ENCODE measurements at regions of chr14 and their contacts with region 1.

Region 1: DNA sequence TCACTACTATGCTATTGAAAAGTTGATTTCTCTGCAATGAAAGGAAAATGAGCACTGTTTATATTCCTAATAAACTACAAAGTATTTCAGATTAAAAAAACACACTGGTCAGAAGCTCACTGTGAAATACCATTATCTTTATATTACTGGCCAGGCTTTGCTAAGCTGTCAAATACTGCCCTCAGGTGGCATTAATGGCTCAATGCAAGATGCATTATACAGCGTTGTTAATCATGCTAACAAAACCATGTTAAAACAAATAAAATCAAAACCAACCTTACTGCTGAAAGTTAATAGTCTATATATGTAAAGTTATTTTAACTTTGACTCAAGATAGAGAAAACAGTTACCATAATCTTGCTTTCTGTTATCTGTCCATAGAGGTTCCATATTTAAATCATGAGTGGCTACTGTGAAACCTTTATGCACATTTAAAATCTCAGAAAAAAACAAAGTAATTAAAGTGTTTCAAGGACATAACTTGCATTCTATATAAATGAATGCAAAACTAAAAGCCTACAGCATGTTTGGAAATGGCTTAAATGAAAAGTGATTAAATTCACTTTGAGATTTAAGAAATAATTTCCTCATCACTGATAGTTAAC is 121.7 kb downstream of the RALGAPA1 start:
- DNase-seq: peak; percentile 2
- ATAC-seq: peak; percentile 90
- H3K4me3 ChIP-seq: no peak overlapping the region
- H3K27ac ChIP-seq: no peak overlapping the region
- H3K4me1 ChIP-seq: peaks cover 15% of the 10 kb centered on the region; the same call in 1 of the 2 replicates
- H3K27me3 ChIP-seq: no peaks in the 10 kb centered on the region
- CTCF ChIP-seq: peak; percentile 71 to 89 (median 89)
- EP300 ChIP-seq: no peak
- POLR2A ChIP-seq: no peak
- RAD21 ChIP-seq: peak; percentile 99

Region 2: DNA sequence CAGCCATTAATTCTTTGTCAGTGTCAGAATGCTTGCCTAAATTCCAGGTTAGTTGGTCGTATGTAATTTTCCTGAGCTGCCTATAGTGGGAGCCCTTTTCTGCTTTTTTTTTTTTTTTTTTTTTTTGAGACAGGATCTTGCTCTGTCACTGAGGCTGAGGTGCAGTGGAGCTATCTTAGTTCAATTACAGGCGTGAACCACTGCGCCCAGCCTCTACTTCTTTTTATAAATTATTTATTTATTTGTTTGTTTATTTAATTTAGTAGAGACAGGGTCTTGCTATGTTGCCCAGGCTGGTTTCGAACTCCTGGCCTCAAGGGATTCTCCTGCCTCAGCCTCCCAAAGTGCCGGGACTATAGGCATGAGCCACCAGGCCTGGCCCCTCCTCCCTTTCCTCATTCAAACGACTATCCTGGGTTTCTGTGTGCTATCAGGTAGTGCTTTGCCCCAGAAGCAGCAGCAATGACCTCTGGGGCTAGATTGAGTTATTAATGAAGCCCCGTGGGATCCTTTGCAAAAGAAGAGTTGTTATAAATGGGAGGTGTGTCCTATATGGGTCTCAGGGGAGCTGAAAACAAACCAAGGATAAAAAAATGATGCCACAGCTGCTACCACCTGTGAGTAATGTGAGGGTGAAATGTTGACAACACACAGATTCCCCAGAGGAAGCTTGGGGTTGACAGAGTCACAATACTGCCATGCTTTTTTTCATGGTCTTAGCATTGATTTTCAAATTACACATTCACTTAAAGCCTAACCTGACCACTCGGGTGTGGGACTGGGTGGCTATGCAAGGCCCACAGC is 248.3 kb before region 1 on chr14:
- CTCF ChIA-PET with region 1: interaction called, 41 read pairs
- POLR2A ChIA-PET with region 1: no interaction called
- RAD21 ChIA-PET with region 1: interaction called, 20 read pairs
- SMC1A ChIA-PET with region 1: interaction called, 25 read pairs
- in situ Hi-C with region 1: loop called (anchors 25 kb)
- intact Hi-C with region 1: loop called (anchors 2 kb)
- DNase-seq: peak; percentile 39
- ATAC-seq: peak; percentile 76
- H3K4me3 ChIP-seq: no peak overlapping the region
- H3K27ac ChIP-seq: no peak overlapping the region
- H3K4me1 ChIP-seq: no peaks in the 10 kb centered on the region
- H3K27me3 ChIP-seq: no peaks in the 10 kb centered on the region
- CTCF ChIP-seq: peak; percentile 45 to 62 (median 54); a peak in 5 of 6 replicates
- EP300 ChIP-seq: no peak; a peak in 1 of 4 replicates
- POLR2A ChIP-seq: no peak
- RAD21 ChIP-seq: peak; percentile 53

Region 3: DNA sequence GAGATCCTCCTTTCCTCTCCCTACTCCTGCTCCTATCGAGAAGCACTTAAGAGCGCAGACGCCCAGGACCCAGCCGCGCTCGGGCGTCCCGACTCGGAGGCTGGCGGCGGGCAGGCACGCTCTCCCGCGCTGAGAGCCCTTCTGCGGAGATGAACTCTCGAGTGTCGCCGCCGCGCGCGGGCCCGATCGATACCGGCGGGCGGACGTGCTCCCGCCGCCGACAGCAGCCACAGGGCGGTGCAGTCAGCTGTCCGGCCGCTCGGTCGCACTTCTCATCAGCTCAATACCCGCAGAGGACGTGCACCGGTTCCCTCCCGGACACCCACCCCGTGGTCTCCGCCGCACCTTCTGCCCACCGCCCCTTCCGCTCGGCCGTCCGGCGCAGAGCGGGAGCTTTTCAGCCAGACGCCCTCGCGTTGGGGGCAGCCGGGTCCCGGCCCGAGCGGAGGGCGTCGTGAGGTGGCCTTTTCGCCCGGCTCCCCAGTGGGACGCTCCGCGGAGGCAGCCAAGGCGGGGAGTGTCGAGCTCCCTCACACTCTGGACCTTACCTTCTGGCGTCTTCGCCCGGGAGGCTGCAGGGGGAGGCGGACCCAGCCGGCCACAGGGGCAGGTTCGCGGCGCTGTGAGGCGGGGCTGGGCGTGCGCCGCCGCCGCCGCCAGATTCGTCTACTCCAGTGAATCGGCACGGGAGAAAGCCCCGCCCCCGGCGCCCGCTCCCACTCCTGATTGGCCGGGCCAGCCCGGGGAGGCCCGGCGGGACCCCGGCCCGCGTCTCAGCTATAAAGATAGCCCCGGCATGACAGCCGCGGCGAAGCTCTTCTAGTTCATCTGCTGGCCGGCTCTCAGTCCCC is 153.9 kb before region 1 on chr14 and contains the start of gene INSM2:
- CTCF ChIA-PET with region 1: no interaction called
- POLR2A ChIA-PET with region 1: no interaction called
- RAD21 ChIA-PET with region 1: no interaction called
- SMC1A ChIA-PET with region 1: no interaction called
- in situ Hi-C with region 1: no loop called
- intact Hi-C with region 1: loop called (anchors 10 kb)
- DNase-seq: no peak
- ATAC-seq: peak; percentile 91
- H3K4me3 ChIP-seq: peak within 1 kb of the TSS; percentile 70
- H3K27ac ChIP-seq: no peak within 1 kb of the TSS
- H3K4me1 ChIP-seq: peaks cover 8% of the 10 kb centered on the region
- H3K27me3 ChIP-seq: peaks cover 6 to 16% of the 10 kb centered on the region in 2 experiments
- CTCF ChIP-seq: 0 out of 6 replicates have a peak, but pooled peaks of 1 of the 3 experiments have one; percentile 5
- EP300 ChIP-seq: no peak
- POLR2A ChIP-seq: no peak
- RAD21 ChIP-seq: no peak
- polyA plus RNA-seq, gene INSM2: not detected

Region 4: DNA sequence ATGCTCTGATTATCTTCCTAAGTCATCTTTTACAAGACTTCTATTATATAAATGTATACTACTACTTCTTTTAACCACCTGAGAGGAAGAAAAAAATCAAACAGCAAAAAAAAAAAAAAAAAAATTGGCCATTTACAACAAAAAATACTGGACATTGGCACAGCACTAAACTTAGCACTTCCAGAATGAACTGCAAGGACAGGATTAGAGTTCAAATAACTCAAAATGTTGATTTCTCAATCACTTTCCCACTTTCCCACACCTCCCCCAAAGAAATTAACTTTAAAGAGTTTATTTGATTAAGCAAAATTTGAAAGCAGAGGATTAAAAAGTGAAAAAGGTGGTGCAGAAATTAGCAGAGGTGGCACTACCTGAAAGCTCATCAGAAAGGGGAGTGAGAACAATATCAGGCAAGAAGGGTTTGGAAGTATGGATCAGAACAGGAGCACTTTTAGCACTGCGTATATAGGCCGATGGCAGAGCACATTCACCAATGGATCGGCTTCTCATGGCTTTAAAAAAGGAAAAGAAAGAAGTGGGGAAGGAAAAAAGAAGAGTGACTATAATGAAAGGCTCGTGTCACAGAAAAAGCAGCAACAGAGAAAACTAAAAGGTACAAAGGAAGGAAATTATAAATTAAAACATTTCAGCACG is 12.5 kb after region 1 on chr14:
- CTCF ChIA-PET with region 1: interaction called, 9 read pairs
- POLR2A ChIA-PET with region 1: no interaction called
- RAD21 ChIA-PET with region 1: interaction called, 4 read pairs
- SMC1A ChIA-PET with region 1: interaction called, 11 read pairs
- in situ Hi-C with region 1: no loop called
- intact Hi-C with region 1: no loop called
- DNase-seq: no peak
- ATAC-seq: no peak
- H3K4me3 ChIP-seq: no peak overlapping the region
- H3K27ac ChIP-seq: no peak overlapping the region
- H3K4me1 ChIP-seq: no peaks in the 10 kb centered on the region
- H3K27me3 ChIP-seq: no peaks in the 10 kb centered on the region
- CTCF ChIP-seq: no peak
- EP300 ChIP-seq: no peak
- POLR2A ChIP-seq: no peak
- RAD21 ChIP-seq: no peak

Region 5: DNA sequence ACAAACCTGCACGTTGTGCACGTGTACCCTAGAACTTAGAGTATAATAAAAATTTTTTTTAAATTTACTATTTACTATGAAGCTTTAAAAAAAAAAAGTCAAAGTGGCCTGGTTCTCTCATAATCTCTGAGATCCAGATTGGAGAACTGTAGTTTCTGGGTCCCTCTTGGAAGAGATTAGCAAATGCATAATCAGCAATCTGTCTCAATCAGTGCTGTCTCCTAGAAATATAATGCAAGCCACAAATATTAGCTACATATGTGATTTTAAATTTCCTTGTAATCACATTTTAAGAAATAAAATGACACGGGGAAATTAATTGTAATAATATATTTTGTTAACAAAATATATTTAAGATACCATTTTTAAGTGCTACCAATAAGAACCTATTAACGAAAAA is 89.4 kb after region 1 on chr14:
- CTCF ChIA-PET with region 1: no interaction called
- POLR2A ChIA-PET with region 1: no interaction called
- RAD21 ChIA-PET with region 1: no interaction called
- SMC1A ChIA-PET with region 1: no interaction called
- in situ Hi-C with region 1: no loop called
- intact Hi-C with region 1: no loop called
- DNase-seq: no peak
- ATAC-seq: no peak
- H3K4me3 ChIP-seq: no peak overlapping the region
- H3K27ac ChIP-seq: no peak overlapping the region
- H3K4me1 ChIP-seq: no peaks in the 10 kb centered on the region
- H3K27me3 ChIP-seq: no peaks in the 10 kb centered on the region
- CTCF ChIP-seq: no peak
- EP300 ChIP-seq: no peak
- POLR2A ChIP-seq: no peak
- RAD21 ChIP-seq: no peak

Region 6: GRCh38 chr14:35808076-35808652 is 120.7 kb after region 1 on chr14:
- CTCF ChIA-PET with region 1: interaction called, 9 read pairs
- POLR2A ChIA-PET with region 1: no interaction called
- RAD21 ChIA-PET with region 1: no interaction called
- SMC1A ChIA-PET with region 1: no interaction called
- in situ Hi-C with region 1: no loop called
- intact Hi-C with region 1: loop called (anchors 5 kb)
- DNase-seq: no peak
- ATAC-seq: peak; percentile 7; the same call in 2 of the 3 replicates
- H3K4me3 ChIP-seq: peak overlapping the region; percentile 79
- H3K27ac ChIP-seq: peak overlapping the region; percentile 75
- H3K4me1 ChIP-seq: no peaks in the 10 kb centered on the region
- H3K27me3 ChIP-seq: no peaks in the 10 kb centered on the region
- CTCF ChIP-seq: no peak
- EP300 ChIP-seq: no peak
- POLR2A ChIP-seq: no peak
- RAD21 ChIP-seq: no peak

Measured in GM12878 (cell line).